H1 (cell line): ENCODE measurements at regions of chr13 and their contacts with region 1.

Region 1: GRCh38 chr13:34913040-34913439 is 29.0 kb upstream of the NBEA start:
- DNase-seq: peak; percentile 38 to 63
- H3K4me3 ChIP-seq: no peak overlapping the region
- H3K27ac ChIP-seq: 0 out of 2 replicates have a peak overlapping the region, but pooled peaks have one; percentile 39
- H3K4me1 ChIP-seq: peaks cover 4 to 37% (median 19%) of the 10 kb centered on the region in 4 experiments; a peak in 6 of 7 replicates
- H3K27me3 ChIP-seq: no peaks in the 10 kb centered on the region
- CTCF ChIP-seq: no peak
- EP300 ChIP-seq: peak in 1 of 2 experiments; percentile 9; a peak in 1 of 3 replicates
- POLR2A ChIP-seq: no peak
- RAD21 ChIP-seq: peak in 1 of 2 experiments; percentile 13; a peak in 1 of 4 replicates

Region 2: GRCh38 chr13:34842466-34842865 is 70.6 kb before region 1 on chr13:
- CTCF ChIA-PET with region 1: no interaction called
- POLR2A ChIA-PET with region 1: no interaction called
- DNase-seq: no peak
- H3K4me3 ChIP-seq: no peak overlapping the region
- H3K27ac ChIP-seq: no peak overlapping the region
- H3K4me1 ChIP-seq: no peaks in the 10 kb centered on the region
- H3K27me3 ChIP-seq: no peaks in the 10 kb centered on the region
- CTCF ChIP-seq: no peak
- EP300 ChIP-seq: no peak
- POLR2A ChIP-seq: no peak
- RAD21 ChIP-seq: no peak

Region 3: GRCh38 chr13:34900288-34900739 is 12.7 kb before region 1 on chr13:
- CTCF ChIA-PET with region 1: no interaction called
- POLR2A ChIA-PET with region 1: interaction called, 34 read pairs
- DNase-seq: peak; percentile 53 to 58
- H3K4me3 ChIP-seq: peak overlapping the region in 1 of 4 experiments; percentile 40; a peak in 2 of 8 replicates
- H3K27ac ChIP-seq: no peak overlapping the region; the same call in 1 of the 2 replicates
- H3K4me1 ChIP-seq: peaks cover 2 to 23% (median 17%) of the 10 kb centered on the region in 4 experiments
- H3K27me3 ChIP-seq: no peaks in the 10 kb centered on the region; a peak in 1 of 7 replicates
- CTCF ChIP-seq: no peak
- EP300 ChIP-seq: peak in 1 of 2 experiments; percentile 78; a peak in 1 of 3 replicates
- POLR2A ChIP-seq: peak in 1 of 2 experiments; percentile 40; a peak in 1 of 3 replicates
- RAD21 ChIP-seq: peak in 1 of 2 experiments; percentile 4; a peak in 1 of 4 replicates